Mammary epithelial cell (primary cell): ENCODE measurements at regions of chr9 and their contacts with region 1.

Region 1: GRCh38 chr9:20236676-20237075 is 385.6 kb downstream of the MLLT3 start:
- DNase-seq: peak; percentile 86
- H3K4me3 ChIP-seq: no peak overlapping the region
- H3K27ac ChIP-seq: peak overlapping the region; percentile 56
- H3K4me1 ChIP-seq: peaks cover 25% of the 10 kb centered on the region
- H3K27me3 ChIP-seq: no peaks in the 10 kb centered on the region
- CTCF ChIP-seq: no peak

Region 2: GRCh38 chr9:19999491-20000057 is 237.1 kb before region 1 on chr9:
- CTCF ChIA-PET with region 1: no interaction called
- dilution Hi-C with region 1: no loop called
- in situ Hi-C with region 1: no loop called
- intact Hi-C with region 1: loop called (anchors 5 kb)
- DNase-seq: peak; percentile 96
- H3K4me3 ChIP-seq: no peak overlapping the region
- H3K27ac ChIP-seq: peak overlapping the region; percentile 90
- H3K4me1 ChIP-seq: peaks cover 42% of the 10 kb centered on the region
- H3K27me3 ChIP-seq: no peaks in the 10 kb centered on the region
- CTCF ChIP-seq: no peak

Region 3: GRCh38 chr9:20280330-20280729 is 43.7 kb after region 1 on chr9:
- CTCF ChIA-PET with region 1: no interaction called
- dilution Hi-C with region 1: no loop called
- in situ Hi-C with region 1: no loop called
- intact Hi-C with region 1: no loop called
- DNase-seq: no peak
- H3K4me3 ChIP-seq: no peak overlapping the region
- H3K27ac ChIP-seq: no peak overlapping the region
- H3K4me1 ChIP-seq: no peaks in the 10 kb centered on the region
- H3K27me3 ChIP-seq: no peaks in the 10 kb centered on the region
- CTCF ChIP-seq: no peak

Region 4: DNA sequence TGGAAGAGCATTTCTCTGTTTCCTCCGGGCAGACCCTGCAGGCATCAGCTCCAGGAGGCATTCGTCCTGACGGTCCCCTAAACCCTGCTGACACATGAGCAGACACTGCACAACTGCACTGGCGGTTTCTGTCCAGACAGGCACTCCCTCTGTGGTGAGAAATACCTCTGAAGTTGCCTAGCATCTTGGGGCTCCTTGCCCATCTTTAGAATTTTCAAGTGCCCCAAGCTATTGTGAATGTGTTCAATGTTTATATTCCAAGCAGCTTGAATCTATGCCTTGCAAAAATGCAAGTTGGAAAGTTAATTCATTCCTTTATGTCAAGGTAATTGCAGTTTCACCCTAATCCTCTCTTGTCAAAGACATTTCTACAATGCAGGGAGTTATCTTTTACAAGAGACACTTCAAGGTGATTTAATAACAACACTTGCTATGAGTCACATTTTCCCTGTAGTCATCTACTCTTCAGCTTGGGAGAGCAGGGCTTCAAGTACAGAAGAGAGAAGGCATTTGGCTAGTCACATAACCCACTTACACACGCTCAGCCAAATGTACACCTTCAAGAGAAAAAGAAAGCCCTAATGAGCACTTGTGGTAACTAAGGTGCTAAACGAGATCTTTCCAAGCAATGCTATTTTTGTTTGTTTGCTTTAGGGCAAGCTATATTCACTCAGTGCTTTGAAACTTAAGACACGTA is 83.1 kb after region 1 on chr9:
- CTCF ChIA-PET with region 1: no interaction called
- dilution Hi-C with region 1: no loop called
- in situ Hi-C with region 1: no loop called
- intact Hi-C with region 1: loop called (anchors 10 kb)
- DNase-seq: peak; percentile 85
- H3K4me3 ChIP-seq: no peak overlapping the region
- H3K27ac ChIP-seq: peak overlapping the region; percentile 74
- H3K4me1 ChIP-seq: peaks cover 42% of the 10 kb centered on the region
- H3K27me3 ChIP-seq: no peaks in the 10 kb centered on the region
- CTCF ChIP-seq: no peak